ENCODE measurements at regions of chr5 and their contacts with region 1.

Region 1: GRCh38 chr5:61331407-61332357 is at the start of gene ZSWIM6:
- DNase-seq: peak; percentile 99
- ATAC-seq: peak; percentile 80
- H3K4me3 ChIP-seq: peak within 1 kb of the TSS; percentile 96
- H3K27ac ChIP-seq: peak within 1 kb of the TSS; percentile 92
- H3K4me1 ChIP-seq: peaks cover 20% of the 10 kb centered on the region
- H3K27me3 ChIP-seq: no peaks in the 10 kb centered on the region
- CTCF ChIP-seq: 0 out of 2 replicates have a peak, but pooled peaks have one; percentile 1
- POLR2A ChIP-seq: peak; percentile 98
- RAD21 ChIP-seq: no peak
- total RNA-seq, gene ZSWIM6: 10.8 TPM in 2 replicates

Region 2: DNA sequence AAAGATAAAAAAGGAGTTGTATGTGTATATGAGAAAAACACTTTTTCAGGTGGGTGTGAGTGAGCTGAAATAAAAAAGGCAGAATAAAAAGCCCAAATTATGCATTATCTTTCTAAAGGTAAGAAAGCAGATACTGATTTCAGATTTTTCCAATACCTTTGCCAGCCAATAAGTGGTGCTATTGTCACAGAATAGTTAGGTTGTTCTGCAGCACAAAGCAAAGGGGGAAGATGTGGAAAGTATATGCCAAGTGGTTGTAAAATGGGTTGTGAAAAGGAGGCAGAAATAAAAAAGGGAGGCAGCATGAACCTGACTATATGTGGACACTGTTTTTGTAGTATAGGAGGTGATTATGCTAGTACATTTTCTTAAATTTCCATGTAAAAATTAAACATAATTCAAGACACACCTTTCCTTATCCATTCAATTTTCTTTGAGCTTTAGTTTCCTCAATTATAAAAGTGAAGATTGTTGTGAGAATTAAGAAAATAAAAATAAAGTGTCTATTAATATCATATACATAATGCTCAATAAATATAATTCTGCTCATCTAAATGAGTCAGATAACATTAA is 276.2 kb before region 1 on chr5:
- CTCF ChIA-PET with region 1: no interaction called
- POLR2A ChIA-PET with region 1: no interaction called
- dilution Hi-C with region 1: no loop called
- in situ Hi-C with region 1: loop called (anchors 10 kb)
- intact Hi-C with region 1: loop called (anchors 1 kb)
- DNase-seq: peak; percentile 72
- ATAC-seq: no peak
- H3K4me3 ChIP-seq: no peak overlapping the region
- H3K27ac ChIP-seq: no peak overlapping the region
- H3K4me1 ChIP-seq: peaks cover 4% of the 10 kb centered on the region; the same call in 1 of the 2 replicates
- H3K27me3 ChIP-seq: no peaks in the 10 kb centered on the region
- CTCF ChIP-seq: peak; percentile 76
- POLR2A ChIP-seq: no peak
- RAD21 ChIP-seq: peak; percentile 83

Region 3: DNA sequence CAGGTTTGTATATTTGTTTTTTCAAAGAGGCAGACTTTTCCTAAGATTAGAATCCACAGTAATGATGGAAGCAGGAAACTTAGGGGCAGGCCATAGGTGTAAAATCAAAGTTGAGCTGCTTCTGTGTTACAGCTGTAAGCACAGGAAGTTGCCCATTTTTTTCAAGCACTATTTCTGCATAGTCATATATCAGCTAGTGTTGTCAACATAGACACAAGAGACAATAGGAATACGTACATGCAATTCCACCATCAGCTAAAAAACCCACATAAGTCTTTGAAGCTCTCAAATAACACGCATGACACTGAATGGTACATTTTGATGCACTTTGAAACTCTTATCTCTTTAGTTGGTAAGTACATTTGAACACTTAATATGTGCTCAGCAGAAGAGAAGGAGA is 149.2 kb before region 1 on chr5:
- CTCF ChIA-PET with region 1: interaction called, 3 read pairs
- POLR2A ChIA-PET with region 1: no interaction called
- dilution Hi-C with region 1: no loop called
- in situ Hi-C with region 1: no loop called
- intact Hi-C with region 1: loop called (anchors 5 kb)
- DNase-seq: peak; percentile 4
- ATAC-seq: no peak
- H3K4me3 ChIP-seq: no peak overlapping the region
- H3K27ac ChIP-seq: no peak overlapping the region
- H3K4me1 ChIP-seq: peaks cover 8% of the 10 kb centered on the region
- H3K27me3 ChIP-seq: no peaks in the 10 kb centered on the region
- CTCF ChIP-seq: no peak
- POLR2A ChIP-seq: no peak
- RAD21 ChIP-seq: no peak

Region 4: DNA sequence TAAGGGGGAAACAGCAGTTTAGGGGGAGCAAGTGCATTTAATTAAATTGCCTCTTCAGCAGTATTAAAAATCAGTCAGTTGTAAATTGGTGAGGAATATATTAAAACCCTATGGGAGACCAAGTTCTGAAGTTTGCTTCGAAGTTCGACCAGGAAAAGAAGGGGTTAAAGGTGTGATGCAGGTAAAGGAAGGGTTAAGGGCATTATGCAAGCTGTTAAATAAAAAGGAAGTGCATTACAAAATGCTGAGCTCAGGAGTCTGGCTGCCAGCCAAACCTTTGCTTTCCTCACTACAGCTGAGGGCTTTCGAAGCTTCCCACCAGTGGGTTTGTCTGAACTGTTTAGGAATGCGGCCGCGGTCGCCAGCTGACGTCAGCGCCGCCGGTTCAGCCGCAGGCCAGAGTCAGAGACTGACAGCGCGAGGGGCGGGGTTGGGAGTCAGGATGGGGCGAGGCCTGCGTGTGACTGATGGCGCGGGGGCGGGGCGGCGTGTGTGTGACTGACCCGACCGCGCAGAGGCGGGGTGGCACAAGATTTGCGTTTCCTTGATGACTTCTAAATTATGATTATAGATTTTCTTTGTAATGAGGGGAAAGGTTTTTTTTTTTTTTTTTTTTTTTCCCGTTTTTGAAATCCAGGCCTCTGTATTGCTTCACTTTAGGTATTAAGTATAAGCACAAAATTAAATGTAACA is 76.9 kb after region 1 on chr5:
- CTCF ChIA-PET with region 1: no interaction called
- POLR2A ChIA-PET with region 1: no interaction called
- dilution Hi-C with region 1: no loop called
- in situ Hi-C with region 1: no loop called
- intact Hi-C with region 1: loop called (anchors 5 kb)
- DNase-seq: peak; percentile 99
- ATAC-seq: peak; percentile 97
- H3K4me3 ChIP-seq: no peak overlapping the region
- H3K27ac ChIP-seq: peak overlapping the region; percentile 38; the same call in 1 of the 2 replicates
- H3K4me1 ChIP-seq: peaks cover 20% of the 10 kb centered on the region
- H3K27me3 ChIP-seq: no peaks in the 10 kb centered on the region
- CTCF ChIP-seq: no peak
- POLR2A ChIP-seq: no peak
- RAD21 ChIP-seq: no peak

Region 5: DNA sequence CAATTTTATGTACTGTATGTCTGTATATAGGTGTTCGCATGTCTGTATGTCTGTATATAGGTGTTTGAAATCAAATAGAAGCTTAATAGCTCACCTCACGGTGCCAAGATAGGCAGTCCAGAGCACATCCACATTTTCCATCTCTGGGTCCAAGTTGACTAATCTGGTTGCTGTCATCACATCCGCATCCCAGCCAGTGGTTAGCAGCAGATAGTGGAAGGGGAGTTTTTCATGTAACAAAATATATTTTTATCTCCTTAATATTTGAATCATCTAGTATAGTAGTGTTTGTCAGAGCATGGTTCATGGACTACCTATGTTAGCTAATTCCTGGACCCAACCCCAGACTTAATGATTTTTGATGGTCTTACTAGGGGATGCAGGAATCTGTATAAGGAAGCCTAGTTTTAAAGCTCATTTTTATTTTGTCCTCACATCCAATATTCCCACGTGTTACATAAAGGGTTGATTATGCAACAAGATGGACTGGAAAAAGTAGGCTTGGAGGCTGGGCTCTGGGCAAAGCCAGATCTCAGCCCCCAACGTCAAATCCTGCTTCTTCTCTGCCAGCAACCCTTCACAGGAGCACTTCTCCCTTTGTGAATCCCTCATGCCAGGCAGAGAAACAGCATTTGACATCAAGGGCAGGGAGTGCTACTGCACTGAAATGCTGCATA is 220.1 kb after region 1 on chr5:
- CTCF ChIA-PET with region 1: no interaction called
- POLR2A ChIA-PET with region 1: no interaction called
- dilution Hi-C with region 1: no loop called
- in situ Hi-C with region 1: no loop called
- intact Hi-C with region 1: no loop called
- DNase-seq: no peak
- ATAC-seq: no peak
- H3K4me3 ChIP-seq: no peak overlapping the region
- H3K27ac ChIP-seq: no peak overlapping the region
- H3K4me1 ChIP-seq: no peaks in the 10 kb centered on the region
- H3K27me3 ChIP-seq: peaks cover 2% of the 10 kb centered on the region; the same call in 1 of the 2 replicates
- CTCF ChIP-seq: no peak
- POLR2A ChIP-seq: no peak
- RAD21 ChIP-seq: no peak

Region 6: DNA sequence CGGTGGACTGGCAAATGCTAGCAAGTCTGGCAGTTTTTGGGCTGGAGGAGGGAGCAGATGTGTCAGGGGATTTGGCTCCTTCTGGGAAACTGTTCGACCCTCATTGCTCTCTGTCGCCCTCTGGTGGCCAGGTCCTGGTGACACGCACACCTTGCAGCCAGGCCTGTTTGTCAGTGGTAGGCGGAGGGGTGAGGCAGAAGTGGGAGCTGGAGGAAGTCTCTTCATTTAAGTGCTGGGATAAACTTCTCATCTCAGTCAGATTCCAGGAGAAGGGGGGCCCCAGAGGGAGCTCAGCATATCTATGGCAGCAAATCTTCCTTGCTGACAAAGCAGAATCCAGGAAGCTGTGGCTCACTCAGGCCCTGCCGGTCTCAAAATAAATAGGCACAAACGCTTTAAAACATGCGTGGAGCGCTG is 326.9 kb after region 1 on chr5:
- CTCF ChIA-PET with region 1: interaction called, 3 read pairs
- POLR2A ChIA-PET with region 1: no interaction called
- dilution Hi-C with region 1: no loop called
- in situ Hi-C with region 1: no loop called
- intact Hi-C with region 1: loop called (anchors 1 kb)
- DNase-seq: peak; percentile 65
- ATAC-seq: peak; percentile 75
- H3K4me3 ChIP-seq: no peak overlapping the region
- H3K27ac ChIP-seq: no peak overlapping the region
- H3K4me1 ChIP-seq: no peaks in the 10 kb centered on the region
- H3K27me3 ChIP-seq: peaks cover 31% of the 10 kb centered on the region
- CTCF ChIP-seq: peak; percentile 85
- POLR2A ChIP-seq: no peak
- RAD21 ChIP-seq: peak; percentile 84

Region 7: GRCh38 chr5:62143268-62144229 is 811.9 kb after region 1 on chr5:
- CTCF ChIA-PET with region 1: no interaction called
- POLR2A ChIA-PET with region 1: no interaction called
- dilution Hi-C with region 1: no loop called
- in situ Hi-C with region 1: no loop called
- intact Hi-C with region 1: loop called (anchors 5 kb)
- DNase-seq: peak; percentile 40
- ATAC-seq: peak; percentile 72
- H3K4me3 ChIP-seq: no peak overlapping the region
- H3K27ac ChIP-seq: no peak overlapping the region
- H3K4me1 ChIP-seq: no peaks in the 10 kb centered on the region
- H3K27me3 ChIP-seq: no peaks in the 10 kb centered on the region; the same call in none of the 2 replicates
- CTCF ChIP-seq: peak; percentile 55
- POLR2A ChIP-seq: no peak
- RAD21 ChIP-seq: peak; percentile 27; the same call in 1 of the 2 replicates